GM12878 (cell line): ENCODE measurements at regions of chr1 and their contacts with region 1.

Region 1: GRCh38 chr1:149906570-149907075 is 7.3 kb downstream of the BOLA1 start:
- DNase-seq: no peak
- ATAC-seq: no peak
- H3K4me3 ChIP-seq: no peak overlapping the region
- H3K27ac ChIP-seq: no peak overlapping the region
- H3K4me1 ChIP-seq: no peaks in the 10 kb centered on the region
- H3K27me3 ChIP-seq: no peaks in the 10 kb centered on the region
- CTCF ChIP-seq: no peak
- EP300 ChIP-seq: no peak
- POLR2A ChIP-seq: no peak
- RAD21 ChIP-seq: no peak

Region 2: GRCh38 chr1:150021191-150021694 is 114.6 kb after region 1 on chr1:
- CTCF ChIA-PET with region 1: no interaction called
- POLR2A ChIA-PET with region 1: no interaction called
- RAD21 ChIA-PET with region 1: no interaction called
- SMC1A ChIA-PET with region 1: no interaction called
- in situ Hi-C with region 1: no loop called
- intact Hi-C with region 1: no loop called
- DNase-seq: no peak
- ATAC-seq: no peak
- H3K4me3 ChIP-seq: no peak overlapping the region
- H3K27ac ChIP-seq: no peak overlapping the region
- H3K4me1 ChIP-seq: peaks cover 12% of the 10 kb centered on the region
- H3K27me3 ChIP-seq: no peaks in the 10 kb centered on the region
- CTCF ChIP-seq: no peak
- EP300 ChIP-seq: no peak
- POLR2A ChIP-seq: no peak
- RAD21 ChIP-seq: no peak

Region 3: DNA sequence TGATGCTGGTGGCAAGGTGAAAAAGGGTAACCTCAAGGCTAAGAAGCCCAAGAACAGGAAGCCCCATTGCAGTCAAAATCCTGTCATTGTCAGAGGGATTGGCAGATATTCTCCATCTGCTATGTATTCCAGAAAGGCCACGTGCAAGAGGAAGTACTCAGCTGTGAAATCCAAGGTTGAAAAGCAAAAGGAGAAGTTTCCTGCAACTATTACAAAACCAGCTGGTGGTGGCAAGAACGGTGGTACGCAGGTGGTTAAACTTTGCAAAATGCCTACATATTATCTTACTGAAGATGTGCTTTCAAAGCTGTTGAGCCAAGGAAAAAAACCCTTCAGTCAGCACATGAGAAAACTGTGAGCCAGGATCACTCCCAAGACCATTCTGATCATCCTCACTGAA is 147.3 kb after region 1 on chr1:
- CTCF ChIA-PET with region 1: interaction called, 3 read pairs
- POLR2A ChIA-PET with region 1: no interaction called
- RAD21 ChIA-PET with region 1: no interaction called
- SMC1A ChIA-PET with region 1: no interaction called
- in situ Hi-C with region 1: loop called (anchors 5 kb)
- intact Hi-C with region 1: no loop called
- DNase-seq: no peak
- ATAC-seq: no peak
- H3K4me3 ChIP-seq: no peak overlapping the region
- H3K27ac ChIP-seq: no peak overlapping the region
- H3K4me1 ChIP-seq: peaks cover 4% of the 10 kb centered on the region
- H3K27me3 ChIP-seq: no peaks in the 10 kb centered on the region
- CTCF ChIP-seq: no peak
- EP300 ChIP-seq: no peak
- POLR2A ChIP-seq: no peak
- RAD21 ChIP-seq: no peak